ENCODE measurements at regions of chr12 and their contacts with region 1.

Region 1: GRCh38 chr12:76031537-76032073 is at the start of gene PHLDA1:
- DNase-seq: peak; percentile 95
- H3K4me3 Mint-ChIP-seq: peak within 1 kb of the TSS; percentile 98
- H3K27ac Mint-ChIP-seq: peak within 1 kb of the TSS; percentile 95
- H3K4me1 Mint-ChIP-seq: peaks cover 59% of the 10 kb centered on the region
- H3K27me3 Mint-ChIP-seq: peaks cover 3% of the 10 kb centered on the region
- total RNA-seq, gene PHLDA1: 42.8 TPM

Region 2: DNA sequence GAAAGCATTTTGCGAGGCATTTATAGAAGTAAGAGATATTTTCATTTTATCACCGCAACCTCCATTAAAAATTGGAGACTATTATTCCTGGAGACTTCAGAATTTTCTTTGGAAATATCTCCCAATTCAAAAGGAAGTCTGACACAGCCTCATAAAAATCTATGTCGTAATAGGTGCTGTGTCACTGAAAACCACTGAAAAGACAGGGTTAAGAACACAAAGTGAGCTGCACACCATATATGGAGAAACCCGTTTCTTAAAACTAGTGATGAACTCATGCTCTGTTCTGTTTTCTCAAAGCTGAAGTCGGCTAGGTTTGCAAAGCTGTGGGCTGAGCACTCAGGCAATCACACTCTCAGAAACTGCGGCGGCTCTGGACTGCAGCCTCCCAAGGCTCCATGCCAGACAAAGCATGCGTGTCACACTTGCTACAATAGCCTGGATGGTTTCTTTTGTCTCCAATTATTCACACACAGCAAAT is 551.1 kb before region 1 on chr12 and contains the start of gene GLIPR1:
- CTCF ChIA-PET with region 1: interaction called, 15 read pairs
- POLR2A ChIA-PET with region 1: interaction called, 17 read pairs
- DNase-seq: peak; percentile 81
- H3K4me3 Mint-ChIP-seq: peak within 1 kb of the TSS; percentile 87
- H3K27ac Mint-ChIP-seq: peak within 1 kb of the TSS; percentile 98
- H3K4me1 Mint-ChIP-seq: peaks cover 71% of the 10 kb centered on the region
- H3K27me3 Mint-ChIP-seq: peaks cover 2% of the 10 kb centered on the region
- total RNA-seq, gene GLIPR1: 52.3 to 54.7 TPM

Region 3: GRCh38 chr12:75526655-75527511 is 504.7 kb before region 1 on chr12:
- CTCF ChIA-PET with region 1: interaction called, 41 read pairs
- POLR2A ChIA-PET with region 1: interaction called, 24 read pairs
- DNase-seq: peak; percentile 30
- H3K4me3 Mint-ChIP-seq: no peak overlapping the region
- H3K27ac Mint-ChIP-seq: no peak overlapping the region
- H3K4me1 Mint-ChIP-seq: peaks cover 8% of the 10 kb centered on the region
- H3K27me3 Mint-ChIP-seq: peaks cover 22% of the 10 kb centered on the region

Region 4: GRCh38 chr12:75814851-75815754 is 216.5 kb before region 1 on chr12:
- CTCF ChIA-PET with region 1: interaction called, 72 read pairs
- POLR2A ChIA-PET with region 1: interaction called, 29 read pairs
- DNase-seq: no peak
- H3K4me3 Mint-ChIP-seq: no peak overlapping the region
- H3K27ac Mint-ChIP-seq: no peak overlapping the region
- H3K4me1 Mint-ChIP-seq: peaks cover 24% of the 10 kb centered on the region
- H3K27me3 Mint-ChIP-seq: no peaks in the 10 kb centered on the region

Region 5: GRCh38 chr12:75933101-75933500 is 98.5 kb before region 1 on chr12:
- CTCF ChIA-PET with region 1: interaction called, 57 read pairs
- POLR2A ChIA-PET with region 1: interaction called, 123 read pairs
- DNase-seq: no peak
- H3K4me3 Mint-ChIP-seq: no peak overlapping the region
- H3K27ac Mint-ChIP-seq: no peak overlapping the region
- H3K4me1 Mint-ChIP-seq: peaks cover 34% of the 10 kb centered on the region
- H3K27me3 Mint-ChIP-seq: peaks cover 5% of the 10 kb centered on the region

Region 6: GRCh38 chr12:75977952-75978671 is 53.5 kb before region 1 on chr12:
- CTCF ChIA-PET with region 1: interaction called, 20 read pairs
- POLR2A ChIA-PET with region 1: interaction called, 127 read pairs
- DNase-seq: peak; percentile 86
- H3K4me3 Mint-ChIP-seq: peak overlapping the region; percentile 32
- H3K27ac Mint-ChIP-seq: peak overlapping the region; percentile 92
- H3K4me1 Mint-ChIP-seq: peaks cover 68% of the 10 kb centered on the region
- H3K27me3 Mint-ChIP-seq: no peaks in the 10 kb centered on the region

Region 7: DNA sequence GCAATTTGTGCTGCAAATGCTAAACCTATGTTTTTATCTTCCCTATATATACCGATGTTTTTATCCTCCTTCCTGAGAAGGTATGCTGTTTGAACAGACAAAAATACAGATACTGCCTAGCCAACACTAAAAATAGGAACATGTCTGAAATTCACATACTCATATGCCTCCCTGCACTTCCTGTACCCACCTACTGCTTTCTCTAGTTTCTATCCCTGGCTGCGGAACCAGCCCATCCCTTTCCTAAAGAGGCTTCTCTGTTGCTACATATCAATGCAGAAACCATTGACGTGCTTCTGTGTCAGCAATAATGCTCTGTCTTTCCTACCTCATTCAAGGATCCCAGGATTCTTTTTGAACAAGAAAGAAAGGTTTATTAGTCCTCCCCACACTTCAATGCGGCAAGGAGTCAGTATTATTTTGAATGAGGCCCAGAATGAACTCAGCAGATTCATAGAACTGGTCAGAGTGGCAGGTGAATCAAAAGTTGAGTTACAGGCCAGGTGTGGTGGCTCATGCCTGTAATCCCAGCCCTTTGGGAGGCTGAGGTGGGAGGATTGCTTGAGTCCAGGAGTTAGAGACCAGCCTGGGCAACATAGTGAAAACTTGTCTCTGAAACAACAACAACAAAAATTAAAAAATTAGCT is 120.7 kb after region 1 on chr12:
- CTCF ChIA-PET with region 1: no interaction called
- POLR2A ChIA-PET with region 1: no interaction called
- DNase-seq: no peak
- H3K4me3 Mint-ChIP-seq: no peak overlapping the region
- H3K27ac Mint-ChIP-seq: no peak overlapping the region
- H3K4me1 Mint-ChIP-seq: peaks cover 5% of the 10 kb centered on the region
- H3K27me3 Mint-ChIP-seq: no peaks in the 10 kb centered on the region